Dorsolateral prefrontal cortex (tissue), 120 donors: ENCODE measurements at regions of chr6 and their contacts with region 1.

Region 1: DNA sequence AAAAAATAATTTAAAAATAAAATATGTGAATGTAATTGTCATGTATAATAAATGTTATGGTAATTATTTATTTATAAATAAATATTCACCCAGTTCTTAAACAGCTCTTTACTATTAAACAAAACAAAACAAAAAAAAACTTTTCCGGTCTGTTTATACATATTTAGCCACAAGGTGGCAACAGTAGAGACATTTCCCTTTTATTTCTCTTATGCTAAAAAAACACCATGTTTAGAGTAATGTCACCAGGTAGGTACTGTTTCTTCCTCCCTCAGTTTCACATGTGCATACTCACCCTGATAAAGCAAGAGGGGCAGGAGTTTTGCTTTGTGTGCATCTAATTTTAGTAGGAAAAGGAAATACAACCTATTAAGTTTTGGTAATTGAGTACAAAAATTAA is 610.4 kb upstream of the IMPG1 start:
- DNase-seq: no peak
- H3K4me3 ChIP-seq: no peak overlapping the region
- H3K27ac ChIP-seq: no peak overlapping the region
- H3K27me3 ChIP-seq: no peaks in the 10 kb centered on the region
- CTCF ChIP-seq: peak in 54 of 56 donors; percentile 14 to 65 (median 45)

Region 2: DNA sequence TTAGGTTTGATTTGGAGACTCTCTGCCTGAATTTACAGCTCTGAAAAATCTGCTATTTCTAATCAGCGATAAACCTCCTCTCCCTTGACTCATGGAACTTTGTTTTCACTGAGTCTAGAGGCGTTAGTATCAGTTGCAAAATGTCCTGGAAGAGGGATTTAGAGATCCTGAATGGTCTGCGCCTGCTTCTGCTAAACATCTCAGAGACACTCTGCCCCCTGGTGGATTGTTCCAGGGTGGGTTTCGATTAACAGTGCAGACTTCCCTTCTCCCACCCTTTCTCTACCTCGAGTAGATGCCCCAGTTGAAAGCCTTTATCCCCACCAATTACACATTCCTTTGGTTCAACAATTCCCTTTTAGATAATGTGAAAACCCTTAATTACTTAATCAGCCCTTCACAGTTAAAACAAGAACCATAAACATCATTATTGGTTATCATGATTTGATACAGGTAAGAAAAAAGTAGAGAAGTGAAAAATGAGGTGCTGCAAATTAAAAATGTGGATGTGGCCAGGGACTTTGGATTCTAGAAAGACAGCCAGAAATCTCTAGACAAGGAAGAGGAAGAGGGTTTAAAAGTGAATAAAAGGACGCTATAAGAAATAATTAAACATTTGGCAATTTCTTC is 775.0 kb after region 1 on chr6:
- intact Hi-C with region 1: loop called in 1 of 2 experiments (anchors 10 kb)
- DNase-seq: peak in 9 of 10 donors; percentile 25 to 83 (median 62)
- H3K4me3 ChIP-seq: no peak overlapping the region
- H3K27ac ChIP-seq: peak overlapping the region in 4 of 59 donors; percentile 11 to 51 (median 24)
- H3K27me3 ChIP-seq: peaks cover 0 to 30% (median 12%) of the 10 kb centered on the region in 45 donors
- CTCF ChIP-seq: peak; percentile 59 to 86 (median 74)